Heart right ventricle (tissue), 16 donors: ENCODE measurements at regions of chr12 and their contacts with region 1.

Region 1: GRCh38 chr12:67943226-67943892 is 45.9 kb upstream of the IFNG-AS1 start:
- DNase-seq: peak in 1 of 2 donors; percentile 79
- ATAC-seq: peak; percentile 79 to 92 (median 88)
- H3K4me3 ChIP-seq: no peak overlapping the region
- H3K27ac ChIP-seq: peak overlapping the region in 6 of 10 donors; percentile 15 to 53 (median 45)
- H3K4me1 ChIP-seq: peaks cover 0 to 26% (median 8%) of the 10 kb centered on the region in 9 donors
- H3K27me3 ChIP-seq: no peaks in the 10 kb centered on the region
- CTCF ChIP-seq: peak; percentile 45 to 83 (median 76)

Region 2: GRCh38 chr12:67426067-67426466 is 517.3 kb before region 1 on chr12:
- intact Hi-C with region 1: loop called in 5 of 10 experiments (anchors 2 to 10 kb)
- DNase-seq: no peak
- ATAC-seq: no peak
- H3K4me3 ChIP-seq: no peak overlapping the region
- H3K27ac ChIP-seq: peak overlapping the region in 2 of 10 donors; percentile 0 to 23
- H3K4me1 ChIP-seq: peaks cover 0 to 32% (median 14%) of the 10 kb centered on the region in 9 donors
- H3K27me3 ChIP-seq: no peaks in the 10 kb centered on the region
- CTCF ChIP-seq: no peak

Region 3: GRCh38 chr12:67433385-67434175 is 509.8 kb before region 1 on chr12:
- intact Hi-C with region 1: loop called in 6 of 10 experiments (anchors 2 to 10 kb)
- DNase-seq: no peak
- ATAC-seq: no peak
- H3K4me3 ChIP-seq: no peak overlapping the region
- H3K27ac ChIP-seq: peak overlapping the region in 7 of 10 donors; percentile 13 to 85 (median 62)
- H3K4me1 ChIP-seq: peaks cover 0 to 41% (median 24%) of the 10 kb centered on the region in 9 donors
- H3K27me3 ChIP-seq: no peaks in the 10 kb centered on the region
- CTCF ChIP-seq: no peak

Region 4: DNA sequence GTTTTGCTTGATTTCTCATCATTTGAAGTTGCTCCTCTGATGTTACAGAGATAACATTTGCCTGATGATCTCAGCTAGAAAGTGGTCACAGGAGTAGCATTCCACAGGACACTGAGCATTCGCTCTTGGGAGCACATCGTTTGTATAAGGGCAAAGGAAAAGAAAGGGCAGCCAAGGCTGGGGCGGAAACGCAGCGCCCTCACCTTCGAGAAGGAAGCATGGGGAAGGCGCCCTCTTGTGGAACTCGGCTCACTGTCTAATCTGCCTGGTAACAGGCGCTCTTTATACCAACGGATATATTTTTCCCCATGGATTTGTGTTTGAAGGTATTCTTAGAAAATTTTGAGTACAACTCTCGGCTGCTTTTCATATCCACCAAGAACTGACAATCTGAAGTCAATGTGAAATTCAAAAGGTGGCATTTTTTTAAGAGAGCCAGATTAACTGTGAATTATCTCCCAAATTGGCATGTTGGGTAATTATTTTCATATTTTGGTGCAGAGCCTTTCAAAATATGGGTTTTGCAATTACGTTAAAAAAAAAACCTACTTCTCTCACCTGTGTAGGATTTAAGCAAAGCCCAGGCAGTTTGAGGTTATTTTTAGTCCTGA is 501.5 kb before region 1 on chr12:
- intact Hi-C with region 1: loop called in 6 of 10 experiments (anchors 5 kb)
- DNase-seq: peak; percentile 86 to 90
- ATAC-seq: peak; percentile 96 to 98 (median 97)
- H3K4me3 ChIP-seq: peak overlapping the region in 6 of 10 donors; percentile 6 to 25 (median 22)
- H3K27ac ChIP-seq: peak overlapping the region in 8 of 10 donors; percentile 6 to 66 (median 40)
- H3K4me1 ChIP-seq: peaks cover 5 to 19% (median 17%) of the 10 kb centered on the region in 9 donors
- H3K27me3 ChIP-seq: no peaks in the 10 kb centered on the region
- CTCF ChIP-seq: peak; percentile 51 to 96 (median 84)

Region 5: DNA sequence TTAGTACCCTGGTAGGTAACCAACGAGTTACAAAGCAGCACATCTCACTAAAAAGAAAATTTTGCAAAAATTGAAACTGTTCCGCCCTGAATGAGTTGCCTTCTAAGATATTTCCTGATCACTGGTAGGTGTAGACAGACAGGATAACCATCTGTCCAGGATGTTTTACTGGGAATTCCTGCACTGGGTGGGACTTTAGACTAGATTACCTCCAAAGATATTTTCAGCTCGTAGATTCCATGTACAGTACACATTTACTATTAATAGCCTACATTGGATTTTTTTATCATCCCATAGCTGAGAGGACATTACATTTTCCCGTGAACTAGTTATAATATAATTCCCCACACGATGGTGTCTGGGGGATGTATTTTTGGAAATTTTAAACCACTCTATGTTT is 155.2 kb before region 1 on chr12:
- intact Hi-C with region 1: loop called in 1 of 10 experiments (anchors 5 kb)
- DNase-seq: no peak
- ATAC-seq: peak in 6 of 8 donors; percentile 43 to 81 (median 70)
- H3K4me3 ChIP-seq: no peak overlapping the region
- H3K27ac ChIP-seq: peak overlapping the region in 4 of 10 donors; percentile 1 to 48 (median 28)
- H3K4me1 ChIP-seq: peaks cover 0 to 45% (median 9%) of the 10 kb centered on the region in 9 donors
- H3K27me3 ChIP-seq: no peaks in the 10 kb centered on the region
- CTCF ChIP-seq: no peak

Region 6: GRCh38 chr12:68012712-68013111 is 69.4 kb after region 1 on chr12:
- intact Hi-C with region 1: no loop called
- DNase-seq: no peak
- ATAC-seq: no peak
- H3K4me3 ChIP-seq: no peak overlapping the region
- H3K27ac ChIP-seq: no peak overlapping the region
- H3K4me1 ChIP-seq: no peaks in the 10 kb centered on the region
- H3K27me3 ChIP-seq: no peaks in the 10 kb centered on the region
- CTCF ChIP-seq: no peak